ENCODE measurements at regions of chr1 and their contacts with region 1.

Region 1: GRCh38 chr1:203326830-203327683 is 21.7 kb downstream of the BTG2 start:
- DNase-seq: peak; percentile 95 to 96 (median 95)
- H3K4me3 ChIP-seq: peak overlapping the region; percentile 15 to 64
- H3K4me3 Mint-ChIP-seq: peak overlapping the region; percentile 79 to 91 (median 86)
- H3K27ac ChIP-seq: peak overlapping the region; percentile 97
- H3K27ac Mint-ChIP-seq: peak overlapping the region; percentile 91 to 99 (median 98)
- H3K4me1 ChIP-seq: peaks cover 64% of the 10 kb centered on the region
- H3K4me1 Mint-ChIP-seq: peaks cover 49 to 73% (median 60%) of the 10 kb centered on the region in 4 donors
- H3K27me3 ChIP-seq: no peaks in the 10 kb centered on the region
- H3K27me3 Mint-ChIP-seq: no peaks in the 10 kb centered on the region

Region 2: GRCh38 chr1:203250911-203251310 is 76.1 kb before region 1 on chr1:
- CTCF ChIA-PET with region 1: no interaction called
- POLR2A ChIA-PET with region 1: no interaction called
- intact Hi-C with region 1: no loop called
- DNase-seq: no peak
- H3K4me3 ChIP-seq: no peak overlapping the region
- H3K4me3 Mint-ChIP-seq: no peak overlapping the region
- H3K27ac ChIP-seq: no peak overlapping the region
- H3K27ac Mint-ChIP-seq: no peak overlapping the region
- H3K4me1 ChIP-seq: no peaks in the 10 kb centered on the region
- H3K4me1 Mint-ChIP-seq: no peaks in the 10 kb centered on the region
- H3K27me3 ChIP-seq: no peaks in the 10 kb centered on the region
- H3K27me3 Mint-ChIP-seq: peaks cover 35 to 51% of the 10 kb centered on the region in 2 donors

Region 3: DNA sequence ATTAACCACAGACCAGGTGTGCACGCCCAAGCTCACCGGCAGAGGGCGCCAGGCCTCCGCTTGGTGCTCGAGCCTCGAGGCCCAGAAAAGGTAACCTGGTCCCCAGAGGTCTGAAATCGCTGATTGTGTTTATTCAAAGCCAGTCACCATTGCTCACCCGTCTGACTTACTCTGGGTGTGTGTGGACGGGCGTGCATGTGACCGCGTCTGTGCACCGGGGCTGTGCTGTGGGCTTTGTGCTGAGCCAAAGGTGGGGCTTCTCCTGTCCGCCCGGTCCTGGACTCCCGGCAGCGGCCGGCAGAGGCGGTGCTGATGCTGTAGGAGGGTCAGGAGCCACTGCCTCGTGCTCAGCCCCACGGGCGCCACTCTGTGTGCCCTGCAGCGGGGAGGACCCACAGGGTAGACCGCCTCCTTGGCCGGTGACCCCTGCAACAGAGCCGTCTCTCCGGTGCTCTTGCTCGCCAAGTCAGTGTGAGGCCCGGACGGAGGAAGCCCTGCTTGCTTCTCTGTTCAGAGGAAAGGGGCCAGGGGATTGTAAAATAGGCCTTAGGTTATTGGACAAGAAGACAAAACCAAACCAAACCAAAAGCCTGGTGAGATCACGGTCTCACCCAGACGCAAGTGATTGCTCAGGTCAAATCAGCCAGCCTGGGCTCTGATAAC is 53.7 kb before region 1 on chr1:
- CTCF ChIA-PET with region 1: interaction called, 921 read pairs
- POLR2A ChIA-PET with region 1: interaction called, 877 read pairs
- intact Hi-C with region 1: loop called (anchors 1 kb)
- DNase-seq: peak; percentile 88 to 91 (median 89)
- H3K4me3 ChIP-seq: peak overlapping the region in 1 of 2 donors; percentile 27
- H3K4me3 Mint-ChIP-seq: peak overlapping the region; percentile 39 to 74 (median 66)
- H3K27ac ChIP-seq: peak overlapping the region; percentile 46
- H3K27ac Mint-ChIP-seq: peak overlapping the region; percentile 40 to 94 (median 86)
- H3K4me1 ChIP-seq: peaks cover 62% of the 10 kb centered on the region
- H3K4me1 Mint-ChIP-seq: peaks cover 22 to 60% (median 44%) of the 10 kb centered on the region in 4 donors
- H3K27me3 ChIP-seq: no peaks in the 10 kb centered on the region
- H3K27me3 Mint-ChIP-seq: no peaks in the 10 kb centered on the region

Region 4: DNA sequence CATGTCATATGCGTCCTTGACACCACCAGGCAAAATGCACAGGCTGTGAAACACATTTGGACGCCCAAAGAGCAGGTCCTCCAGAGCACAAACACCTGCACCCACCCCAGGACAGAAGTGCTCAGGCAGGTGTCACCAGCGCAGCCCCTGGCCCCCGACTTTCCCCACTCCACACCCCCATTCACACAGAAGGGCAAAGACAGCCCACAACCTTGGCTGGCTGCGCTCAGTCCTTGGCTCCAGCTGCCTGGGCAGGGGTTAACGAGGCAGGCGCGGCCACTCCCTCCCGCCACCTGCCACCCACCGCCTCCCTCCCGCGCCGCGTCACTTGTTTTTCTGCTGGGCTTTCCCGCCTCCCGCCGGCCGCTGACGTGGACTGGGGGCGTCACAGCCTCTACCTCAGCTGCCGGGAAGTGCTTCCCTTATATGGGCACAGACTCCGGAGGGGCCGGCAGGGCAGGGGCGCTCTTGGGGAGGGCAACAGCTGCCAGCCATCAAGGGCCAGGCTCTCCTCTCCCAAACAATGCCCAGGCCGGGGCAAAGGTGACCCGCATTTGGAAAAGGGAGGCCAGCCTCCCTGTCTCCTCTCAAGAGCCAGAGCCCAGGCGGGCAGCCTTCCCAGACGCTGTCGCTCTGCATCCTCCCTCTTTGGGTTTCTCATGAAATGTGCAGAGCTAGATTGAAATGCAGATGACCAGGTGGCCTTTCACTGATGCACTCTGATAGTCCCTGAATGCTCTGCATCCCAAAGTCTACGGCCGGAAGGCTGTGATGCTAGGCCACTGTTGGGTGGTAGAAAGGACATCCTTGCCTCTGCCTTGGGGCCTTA is 36.6 kb before region 1 on chr1:
- CTCF ChIA-PET with region 1: interaction called, 78 read pairs
- POLR2A ChIA-PET with region 1: interaction called, 877 read pairs
- intact Hi-C with region 1: loop called (anchors 1 kb)
- DNase-seq: peak; percentile 96 to 98 (median 97)
- H3K4me3 ChIP-seq: peak overlapping the region; percentile 11 to 65
- H3K4me3 Mint-ChIP-seq: peak overlapping the region; percentile 75 to 89 (median 84)
- H3K27ac ChIP-seq: peak overlapping the region; percentile 97
- H3K27ac Mint-ChIP-seq: peak overlapping the region; percentile 98 to 100 (median 100)
- H3K4me1 ChIP-seq: peaks cover 61% of the 10 kb centered on the region
- H3K4me1 Mint-ChIP-seq: peaks cover 48 to 69% (median 58%) of the 10 kb centered on the region in 4 donors
- H3K27me3 ChIP-seq: no peaks in the 10 kb centered on the region
- H3K27me3 Mint-ChIP-seq: no peaks in the 10 kb centered on the region

Region 5: GRCh38 chr1:203299169-203299568 is 27.9 kb before region 1 on chr1:
- CTCF ChIA-PET with region 1: interaction called, 78 read pairs
- POLR2A ChIA-PET with region 1: interaction called, 26 read pairs
- intact Hi-C with region 1: no loop called
- DNase-seq: no peak
- H3K4me3 ChIP-seq: no peak overlapping the region
- H3K4me3 Mint-ChIP-seq: no peak overlapping the region
- H3K27ac ChIP-seq: no peak overlapping the region
- H3K27ac Mint-ChIP-seq: peak overlapping the region in 1 of 7 donors; percentile 21
- H3K4me1 ChIP-seq: peaks cover 14% of the 10 kb centered on the region
- H3K4me1 Mint-ChIP-seq: peaks cover 17 to 38% (median 29%) of the 10 kb centered on the region in 4 donors
- H3K27me3 ChIP-seq: no peaks in the 10 kb centered on the region
- H3K27me3 Mint-ChIP-seq: no peaks in the 10 kb centered on the region

Region 6: GRCh38 chr1:203304919-203305808 is 21.9 kb before region 1 on chr1 and contains the start of gene BTG2:
- CTCF ChIA-PET with region 1: interaction called, 271 read pairs
- POLR2A ChIA-PET with region 1: interaction called, 1,407 read pairs
- intact Hi-C with region 1: loop called (anchors 1 kb)
- DNase-seq: peak; percentile 90 to 94 (median 91)
- H3K4me3 ChIP-seq: peak within 1 kb of the TSS; percentile 87 to 95
- H3K4me3 Mint-ChIP-seq: peak within 1 kb of the TSS; percentile 90 to 99 (median 98)
- H3K27ac ChIP-seq: peak within 1 kb of the TSS; percentile 100
- H3K27ac Mint-ChIP-seq: peak within 1 kb of the TSS; percentile 97 to 100 (median 99)
- H3K4me1 ChIP-seq: peaks cover 50% of the 10 kb centered on the region
- H3K4me1 Mint-ChIP-seq: peaks cover 48 to 82% (median 57%) of the 10 kb centered on the region in 4 donors
- H3K27me3 ChIP-seq: no peaks in the 10 kb centered on the region
- H3K27me3 Mint-ChIP-seq: no peaks in the 10 kb centered on the region
- total RNA-seq, gene BTG2: 197 to 201 TPM

Region 7: DNA sequence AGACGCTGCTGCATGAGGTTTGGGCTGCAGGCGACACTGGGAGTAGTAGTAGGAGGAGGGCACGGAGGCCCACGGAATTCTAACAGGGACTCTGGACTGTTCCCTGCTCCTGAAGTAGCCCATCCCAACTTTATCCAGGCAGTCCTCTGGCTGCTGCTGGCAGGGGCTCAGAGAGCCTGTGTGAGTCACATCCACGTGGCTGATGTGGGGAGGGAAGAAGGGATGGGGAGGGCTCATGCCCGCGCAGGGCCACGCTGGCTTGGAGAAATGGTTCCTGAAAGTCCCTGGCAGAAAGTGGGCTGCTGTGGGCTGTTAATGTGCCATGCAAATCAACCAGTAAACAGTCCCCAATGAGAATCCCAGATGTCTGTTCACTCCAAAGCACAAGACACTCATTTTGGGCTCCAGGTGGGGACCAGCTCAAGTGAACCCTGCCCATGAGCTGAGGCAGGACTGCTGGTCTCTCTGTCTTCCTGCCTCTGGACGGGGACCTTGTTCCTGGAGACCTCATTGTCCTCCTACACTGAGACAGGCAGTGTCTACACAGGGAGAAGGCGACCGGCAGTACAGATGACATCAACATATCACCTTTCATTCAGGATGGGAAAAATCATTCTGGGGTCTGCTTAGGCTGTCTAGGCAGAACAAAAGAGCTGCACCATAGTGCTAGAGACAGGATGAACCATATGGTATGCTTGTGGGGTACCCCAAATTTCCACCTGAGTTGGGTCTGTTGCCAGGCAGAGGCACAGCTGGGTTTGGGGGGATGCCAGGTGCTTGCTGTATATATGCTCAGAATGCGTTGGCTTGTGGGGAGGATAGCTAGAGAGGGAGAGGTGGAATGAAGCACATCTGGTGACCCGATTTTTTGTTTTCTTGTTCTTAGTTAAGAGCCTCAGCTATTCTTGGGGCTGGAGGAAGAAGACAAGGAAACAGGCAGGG is 81.7 kb after region 1 on chr1:
- CTCF ChIA-PET with region 1: no interaction called
- POLR2A ChIA-PET with region 1: no interaction called
- intact Hi-C with region 1: no loop called
- DNase-seq: no peak
- H3K4me3 ChIP-seq: no peak overlapping the region
- H3K4me3 Mint-ChIP-seq: no peak overlapping the region
- H3K27ac ChIP-seq: no peak overlapping the region
- H3K27ac Mint-ChIP-seq: no peak overlapping the region
- H3K4me1 ChIP-seq: no peaks in the 10 kb centered on the region
- H3K4me1 Mint-ChIP-seq: no peaks in the 10 kb centered on the region
- H3K27me3 ChIP-seq: peaks cover 15% of the 10 kb centered on the region
- H3K27me3 Mint-ChIP-seq: peaks cover 36 to 46% of the 10 kb centered on the region in 2 donors

Region 8: DNA sequence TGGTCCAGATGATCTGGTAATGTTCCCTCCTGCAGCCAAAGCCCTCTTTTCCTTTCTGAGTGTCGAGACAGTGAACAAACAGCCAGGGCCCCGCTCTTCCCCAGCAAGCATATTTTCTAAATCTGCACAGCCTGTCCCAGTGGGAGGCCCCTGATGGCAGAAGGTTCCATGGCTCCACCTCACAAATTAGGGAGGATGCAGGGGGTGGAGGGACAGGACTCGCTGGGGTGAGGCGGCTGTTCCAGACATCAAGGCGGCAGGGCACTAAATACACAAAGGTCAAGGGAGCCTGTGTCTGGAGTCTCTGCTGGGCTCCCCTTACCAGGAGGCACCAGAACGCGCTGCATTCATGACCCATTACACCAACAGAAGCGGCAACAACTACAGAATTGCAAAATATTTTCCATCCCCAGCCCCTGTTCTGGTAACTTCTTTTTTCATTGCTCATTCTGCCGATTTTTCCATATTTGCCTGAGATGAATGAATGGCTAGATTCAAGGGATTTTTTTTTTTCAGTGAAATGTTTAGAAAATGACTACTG is 121.5 kb after region 1 on chr1:
- CTCF ChIA-PET with region 1: no interaction called
- POLR2A ChIA-PET with region 1: no interaction called
- intact Hi-C with region 1: no loop called
- DNase-seq: no peak
- H3K4me3 ChIP-seq: no peak overlapping the region
- H3K4me3 Mint-ChIP-seq: no peak overlapping the region
- H3K27ac ChIP-seq: no peak overlapping the region
- H3K27ac Mint-ChIP-seq: peak overlapping the region in 1 of 7 donors; percentile 3
- H3K4me1 ChIP-seq: no peaks in the 10 kb centered on the region
- H3K4me1 Mint-ChIP-seq: peaks cover 0 to 2% (median under 1%) of the 10 kb centered on the region in 4 donors
- H3K27me3 ChIP-seq: peaks cover 6% of the 10 kb centered on the region
- H3K27me3 Mint-ChIP-seq: peaks cover 15 to 30% of the 10 kb centered on the region in 2 donors

Region 9: DNA sequence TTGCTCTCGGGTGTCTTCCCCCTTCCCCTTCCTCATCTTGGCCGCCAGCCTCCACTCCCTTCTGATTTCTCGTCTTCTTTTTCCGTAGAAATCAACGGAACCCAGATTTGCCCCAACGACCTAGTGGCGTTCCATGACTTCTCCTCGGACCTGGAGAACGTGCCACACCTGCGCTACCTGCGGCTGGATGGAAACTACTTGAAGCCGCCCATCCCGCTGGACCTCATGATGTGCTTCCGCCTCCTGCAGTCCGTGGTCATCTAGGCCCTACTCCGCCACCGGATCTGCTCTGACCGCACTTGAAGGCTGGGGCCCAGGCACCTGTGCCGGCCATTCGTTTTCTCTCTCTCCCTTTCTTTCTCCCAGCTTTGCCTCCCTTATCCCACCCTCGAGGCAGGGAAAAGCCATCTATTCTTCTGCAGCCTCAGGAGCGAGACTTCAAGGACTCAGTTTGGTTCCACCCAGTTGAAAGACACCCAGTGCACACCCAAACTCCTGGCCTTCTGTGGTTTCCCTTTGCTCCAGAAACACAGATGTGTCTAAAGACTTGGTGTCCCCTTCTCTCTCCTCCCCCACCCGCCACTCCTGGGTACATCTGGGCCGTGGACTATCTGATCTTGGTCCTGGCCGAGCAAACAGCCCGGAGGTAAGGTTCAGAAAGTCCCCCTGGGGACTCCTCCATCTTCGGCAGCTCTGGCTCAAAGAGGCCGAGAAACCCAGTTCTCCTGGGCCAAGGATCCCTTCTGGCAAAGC is 159.7 kb after region 1 on chr1:
- CTCF ChIA-PET with region 1: interaction called, 10 read pairs
- POLR2A ChIA-PET with region 1: interaction called, 4 read pairs
- intact Hi-C with region 1: no loop called
- DNase-seq: no peak
- H3K4me3 ChIP-seq: no peak overlapping the region
- H3K4me3 Mint-ChIP-seq: peak overlapping the region; percentile 79 to 86 (median 84)
- H3K27ac ChIP-seq: no peak overlapping the region
- H3K27ac Mint-ChIP-seq: peak overlapping the region in 4 of 7 donors; percentile 42 to 89 (median 76)
- H3K4me1 ChIP-seq: peaks cover 13% of the 10 kb centered on the region
- H3K4me1 Mint-ChIP-seq: peaks cover 1 to 22% (median 11%) of the 10 kb centered on the region in 4 donors
- H3K27me3 ChIP-seq: peaks cover 4% of the 10 kb centered on the region
- H3K27me3 Mint-ChIP-seq: peaks cover 2 to 4% of the 10 kb centered on the region in 2 donors

Region 10: DNA sequence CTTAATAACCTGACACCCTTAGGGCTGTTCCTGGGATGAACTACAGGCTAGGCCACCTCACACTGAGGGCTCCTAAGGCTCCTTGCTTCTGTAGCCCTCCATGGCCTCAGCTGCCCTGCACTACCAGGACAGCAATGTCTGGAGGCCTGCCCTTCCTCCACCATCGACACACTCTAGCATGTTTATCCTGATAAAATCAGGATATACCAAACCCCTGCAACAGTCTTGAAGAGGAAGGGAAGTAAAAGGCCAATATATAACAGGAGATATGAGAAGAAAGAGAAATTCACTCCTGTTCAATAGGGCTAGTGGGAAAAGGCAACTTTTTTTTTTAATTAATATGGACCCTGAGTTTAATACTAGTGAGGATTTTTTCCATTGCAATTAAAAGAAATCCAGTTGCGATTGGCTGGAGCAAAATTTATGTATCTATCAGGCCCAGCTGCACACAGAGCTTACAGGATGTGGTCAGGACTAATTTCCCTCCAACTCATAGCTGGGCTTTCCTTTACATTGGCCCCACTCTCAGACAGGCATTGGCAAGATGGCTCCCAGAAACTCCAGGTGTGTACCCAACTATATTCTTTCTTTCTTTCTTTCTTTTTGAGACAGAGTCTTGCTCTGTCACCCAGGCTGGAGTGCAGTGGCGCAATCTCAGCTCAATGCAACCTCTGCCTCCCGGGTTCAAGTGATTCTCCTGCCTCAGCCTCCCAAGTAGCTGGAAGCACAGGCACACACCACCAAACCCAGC is 286.1 kb after region 1 on chr1:
- CTCF ChIA-PET with region 1: no interaction called
- POLR2A ChIA-PET with region 1: no interaction called
- intact Hi-C with region 1: loop called (anchors 5 kb)
- DNase-seq: no peak
- H3K4me3 ChIP-seq: no peak overlapping the region
- H3K4me3 Mint-ChIP-seq: peak overlapping the region in 5 of 8 donors; percentile 21 to 57 (median 49)
- H3K27ac ChIP-seq: no peak overlapping the region
- H3K27ac Mint-ChIP-seq: peak overlapping the region in 6 of 7 donors; percentile 41 to 73 (median 56)
- H3K4me1 ChIP-seq: peaks cover 39% of the 10 kb centered on the region
- H3K4me1 Mint-ChIP-seq: peaks cover 29 to 53% (median 39%) of the 10 kb centered on the region in 4 donors
- H3K27me3 ChIP-seq: no peaks in the 10 kb centered on the region
- H3K27me3 Mint-ChIP-seq: no peaks in the 10 kb centered on the region

Measured in CD4-positive, alpha-beta memory T cell (primary cell).